ENCODE measurements at regions of chr18 and their contacts with region 1.

Region 1: GRCh38 chr18:65146482-65147021 is 604.3 kb upstream of the CDH7 start:
- DNase-seq: no peak
- ATAC-seq: no peak
- H3K4me3 Mint-ChIP-seq: no peak overlapping the region
- H3K27ac Mint-ChIP-seq: no peak overlapping the region
- H3K4me1 Mint-ChIP-seq: no peaks in the 10 kb centered on the region
- H3K27me3 Mint-ChIP-seq: no peaks in the 10 kb centered on the region

Region 2: GRCh38 chr18:65175681-65176080 is 29.1 kb after region 1 on chr18:
- CTCF ChIA-PET with region 1: no interaction called
- POLR2A ChIA-PET with region 1: no interaction called
- intact Hi-C with region 1: loop called in 1 of 2 experiments (anchors 2 kb)
- DNase-seq: no peak
- ATAC-seq: no peak
- H3K4me3 Mint-ChIP-seq: no peak overlapping the region
- H3K27ac Mint-ChIP-seq: no peak overlapping the region
- H3K4me1 Mint-ChIP-seq: no peaks in the 10 kb centered on the region
- H3K27me3 Mint-ChIP-seq: no peaks in the 10 kb centered on the region

Region 3: DNA sequence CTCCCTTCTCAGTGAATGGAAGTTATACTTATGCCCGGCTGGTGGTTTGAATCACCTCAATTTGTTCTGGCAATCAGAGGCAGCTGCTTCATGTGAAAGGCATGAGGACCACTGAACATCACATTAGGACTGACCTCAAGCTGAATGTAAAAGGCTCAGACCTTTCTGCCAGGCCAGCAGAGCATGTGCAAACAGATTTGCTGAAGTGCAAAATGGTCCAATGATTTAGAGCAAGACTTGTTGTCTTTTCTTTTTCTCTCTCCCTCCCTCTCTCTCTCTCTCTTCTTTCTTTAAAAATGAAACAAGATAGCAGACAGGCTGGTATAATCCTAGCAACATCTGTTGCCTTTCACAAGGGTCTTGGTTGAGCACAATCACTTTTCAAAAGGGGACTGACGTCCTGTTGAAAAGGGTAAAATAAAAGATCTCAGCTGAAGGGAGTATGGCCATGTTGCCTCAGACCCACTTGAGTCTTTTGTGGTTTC is 591.0 kb after region 1 on chr18:
- CTCF ChIA-PET with region 1: no interaction called
- POLR2A ChIA-PET with region 1: no interaction called
- intact Hi-C with region 1: no loop called
- DNase-seq: no peak
- ATAC-seq: no peak
- H3K4me3 Mint-ChIP-seq: no peak overlapping the region
- H3K27ac Mint-ChIP-seq: no peak overlapping the region
- H3K4me1 Mint-ChIP-seq: no peaks in the 10 kb centered on the region
- H3K27me3 Mint-ChIP-seq: no peaks in the 10 kb centered on the region

Measured in activated CD4-positive, alpha-beta T cell treated with anti-CD3 and anti-CD28 coated beads for 36 hours (primary cell).